Dendritic cell treated with granulocyte-macrophage colony-stimulating factor and Interleukin-4, amounts not matched to agents 40 ng/mL and 50 ng/mL, for 4 days (primary cell): ENCODE measurements at regions of chr20 and their contacts with region 1.

Region 1: GRCh38 chr20:25247956-25248785 is at the start of gene PYGB:
- H3K4me3 Mint-ChIP-seq: peak within 1 kb of the TSS; percentile 91
- H3K27ac Mint-ChIP-seq: peak within 1 kb of the TSS; percentile 82
- H3K4me1 Mint-ChIP-seq: peaks cover 59% of the 10 kb centered on the region
- H3K27me3 Mint-ChIP-seq: peaks cover 6% of the 10 kb centered on the region

Region 2: GRCh38 chr20:25195014-25195961 is 52.9 kb before region 1 on chr20 and contains the start of gene ENTPD6:
- intact Hi-C with region 1: loop called (anchors 1 kb)
- H3K4me3 Mint-ChIP-seq: peak within 1 kb of the TSS; percentile 97
- H3K27ac Mint-ChIP-seq: peak within 1 kb of the TSS; percentile 75
- H3K4me1 Mint-ChIP-seq: peaks cover 40% of the 10 kb centered on the region
- H3K27me3 Mint-ChIP-seq: peaks cover 11% of the 10 kb centered on the region